ENCODE measurements at regions of chr15 and their contacts with region 1.

Region 1: DNA sequence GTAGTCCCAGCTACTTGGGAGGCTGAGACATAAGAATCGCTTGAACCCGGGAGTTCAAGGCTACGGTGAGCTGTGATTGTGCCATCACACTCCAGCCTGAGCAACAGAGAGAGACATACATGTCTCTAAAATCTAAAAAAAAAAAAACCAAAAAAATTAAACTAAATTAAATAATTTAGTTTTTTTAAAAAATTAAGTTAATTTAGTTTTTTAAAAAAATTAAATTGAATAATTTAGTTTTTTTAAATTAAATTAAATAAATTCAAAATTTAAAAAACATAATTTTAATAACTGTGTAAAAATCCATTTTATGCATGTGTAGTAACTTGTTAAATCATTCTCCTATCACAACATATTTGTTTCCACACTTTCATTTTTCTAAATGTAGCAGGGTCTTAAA is 20.1 kb upstream of the ARPIN start:
- DNase-seq: no peak

Region 2: DNA sequence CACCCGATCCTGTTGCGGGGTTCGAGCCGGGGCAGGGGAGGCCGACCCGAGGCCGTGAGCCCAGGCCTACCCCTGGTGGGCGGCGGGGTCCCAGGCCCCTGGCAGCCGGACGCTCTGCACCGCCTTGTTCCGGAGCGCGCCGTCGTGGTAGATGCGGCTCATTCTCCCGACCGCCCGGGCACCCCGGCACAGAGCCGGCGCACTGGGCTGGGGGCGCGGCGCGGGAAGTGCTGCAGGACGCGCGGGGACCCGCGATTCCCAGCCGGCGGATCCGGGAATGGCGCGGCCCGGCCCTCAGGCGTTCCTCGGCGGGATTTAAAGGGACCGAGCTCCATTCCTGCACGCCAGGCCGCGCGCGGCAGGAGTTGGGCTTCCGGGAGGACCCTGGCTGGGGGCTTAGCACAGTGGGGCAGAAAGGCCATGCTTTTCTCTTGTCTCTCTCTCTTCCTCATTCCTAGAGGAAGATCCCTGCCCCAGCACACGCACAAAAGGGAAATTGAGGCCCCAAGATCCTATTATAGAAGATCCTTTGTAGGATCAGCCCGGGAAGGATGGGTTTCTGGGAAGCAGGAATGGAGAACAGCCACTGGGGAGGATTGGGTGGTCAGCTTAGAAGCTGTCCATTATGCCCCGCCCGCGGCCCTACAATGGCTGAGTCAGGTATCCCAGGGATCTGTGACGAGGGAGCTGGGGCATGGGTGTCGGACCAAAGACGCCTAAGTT is 20.0 kb before region 1 on chr15 and contains the start of gene ARPIN:
- CTCF ChIA-PET with region 1: interaction called, 4 read pairs
- POLR2A ChIA-PET with region 1: interaction called, 16 read pairs
- DNase-seq: peak; percentile 79